H1 (cell line): ENCODE measurements at regions of chr6 and their contacts with region 1.

Region 1: DNA sequence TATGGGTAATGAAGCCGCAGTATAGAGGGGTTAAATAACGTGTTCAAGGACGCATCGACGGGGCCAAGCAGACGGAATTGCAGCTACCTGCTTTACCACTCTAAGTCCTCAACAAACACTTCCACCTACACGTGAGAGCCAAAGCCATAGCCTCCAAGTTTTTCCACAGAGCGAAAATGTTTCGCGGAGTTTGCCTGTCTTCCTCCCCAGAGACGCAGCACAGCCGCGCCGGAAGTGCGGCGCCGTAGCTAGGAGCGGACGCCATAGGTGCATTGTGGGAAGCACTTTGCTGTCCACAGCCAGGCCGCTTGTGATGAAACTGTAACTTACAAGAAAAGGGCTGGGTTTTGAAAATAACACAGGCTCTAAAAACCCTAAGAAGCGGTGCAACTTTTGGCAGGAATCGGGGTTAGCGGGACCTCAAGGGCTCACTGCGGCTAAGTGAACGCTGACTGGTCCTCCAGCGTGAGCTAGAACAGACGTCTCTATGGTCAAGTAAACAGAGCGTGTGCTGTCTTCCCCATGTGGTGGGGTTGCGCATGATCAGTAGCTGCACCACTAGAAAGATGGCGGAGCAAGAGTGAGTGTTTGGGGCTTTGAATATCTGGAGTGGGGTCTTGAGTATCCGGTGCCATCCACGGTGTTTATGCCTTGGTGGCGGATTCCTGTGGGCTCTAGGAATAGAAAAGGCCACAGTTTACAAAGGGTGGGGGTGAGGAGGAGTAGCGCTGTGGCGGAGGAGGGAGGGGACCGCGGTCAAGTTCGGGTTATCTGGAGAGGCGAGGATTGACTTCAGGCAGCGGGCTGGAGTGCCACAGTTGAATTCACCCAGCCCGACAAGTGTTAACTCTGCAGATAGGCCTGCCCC is at the start of gene RPL7L1:
- DNase-seq: peak in 1 of 2 experiments; percentile 85
- H3K4me3 ChIP-seq: peak within 1 kb of the TSS; percentile 89 to 99 (median 97)
- H3K27ac ChIP-seq: peak within 1 kb of the TSS; percentile 93
- H3K4me1 ChIP-seq: no peaks in the 10 kb centered on the region
- H3K27me3 ChIP-seq: no peaks in the 10 kb centered on the region
- CTCF ChIP-seq: no peak
- EP300 ChIP-seq: no peak
- POLR2A ChIP-seq: peak; percentile 92 to 97
- RAD21 ChIP-seq: no peak
- total RNA-seq, gene RPL7L1: 112 and 117 TPM in 2 replicates

Region 2: DNA sequence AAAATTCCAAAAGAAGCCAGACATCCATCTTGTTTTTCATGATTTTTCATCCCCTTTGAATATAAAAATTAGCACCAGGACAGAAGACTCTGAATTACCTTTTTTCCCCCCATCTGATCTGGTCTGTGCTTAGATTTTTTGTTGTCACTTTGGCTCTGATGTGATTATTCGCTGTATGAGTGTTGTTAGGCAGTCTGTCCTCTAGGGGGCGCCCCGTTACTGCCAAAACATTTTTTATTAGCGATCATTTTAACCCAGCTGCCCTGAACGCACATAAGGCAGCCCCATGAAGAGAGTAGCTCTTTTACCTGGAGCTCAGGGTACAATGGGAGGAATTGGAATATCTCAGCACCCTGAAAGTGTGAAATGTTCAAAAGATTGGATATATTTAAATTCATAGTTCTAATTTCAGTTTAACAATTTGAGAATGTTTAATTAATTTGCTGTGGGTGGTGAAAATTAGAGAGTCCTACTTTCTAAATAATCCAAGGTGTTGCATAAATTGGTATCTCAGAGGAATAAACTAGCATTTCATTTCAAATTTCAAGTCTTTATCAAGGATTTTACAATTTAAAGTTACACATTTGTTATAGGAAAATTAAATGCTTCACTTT is 218.0 kb before region 1 on chr6:
- CTCF ChIA-PET with region 1: interaction called, 13 read pairs
- POLR2A ChIA-PET with region 1: interaction called, 4 read pairs
- DNase-seq: peak; percentile 13 to 91
- H3K4me3 ChIP-seq: no peak overlapping the region
- H3K27ac ChIP-seq: no peak overlapping the region
- H3K4me1 ChIP-seq: no peaks in the 10 kb centered on the region
- H3K27me3 ChIP-seq: no peaks in the 10 kb centered on the region
- CTCF ChIP-seq: peak; percentile 16 to 88 (median 79)
- EP300 ChIP-seq: no peak
- POLR2A ChIP-seq: no peak
- RAD21 ChIP-seq: peak; percentile 85 to 92

Region 3: GRCh38 chr6:42726485-42727086 is 153.0 kb before region 1 on chr6:
- CTCF ChIA-PET with region 1: interaction called, 39 read pairs
- POLR2A ChIA-PET with region 1: interaction called, 8 read pairs
- DNase-seq: peak in 1 of 2 experiments; percentile 54
- H3K4me3 ChIP-seq: no peak overlapping the region
- H3K27ac ChIP-seq: no peak overlapping the region
- H3K4me1 ChIP-seq: no peaks in the 10 kb centered on the region
- H3K27me3 ChIP-seq: no peaks in the 10 kb centered on the region
- CTCF ChIP-seq: peak; percentile 70 to 90 (median 89)
- EP300 ChIP-seq: no peak
- POLR2A ChIP-seq: no peak
- RAD21 ChIP-seq: peak; percentile 95 to 97

Region 4: DNA sequence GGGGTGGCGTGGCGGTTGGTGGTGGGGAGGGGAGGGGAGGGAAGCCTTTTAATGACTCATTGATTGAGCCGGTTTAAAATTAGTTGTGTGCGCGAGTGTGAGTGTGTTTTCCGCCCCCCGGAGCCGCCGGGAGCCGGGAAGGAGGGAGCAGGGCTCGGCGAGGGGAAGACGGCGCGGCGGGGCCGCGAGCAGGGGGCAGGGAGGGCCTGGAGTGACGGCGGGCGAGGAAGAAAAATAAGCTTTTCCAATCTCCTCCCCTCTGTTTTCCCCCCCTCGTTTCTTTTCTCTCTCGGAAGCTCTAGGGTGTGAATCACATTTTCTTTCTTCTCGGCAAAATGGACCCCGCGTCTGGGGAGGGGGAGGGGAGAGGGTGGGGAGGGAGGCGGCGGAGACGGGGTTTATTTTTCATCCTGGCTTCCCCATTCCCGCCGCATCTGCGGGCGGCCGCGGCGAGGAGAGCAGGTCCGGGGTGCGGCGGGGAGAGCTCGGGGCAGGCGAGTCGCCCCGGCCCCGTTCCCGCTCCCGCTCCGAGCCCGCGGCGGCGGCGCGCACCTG is 96.9 kb before region 1 on chr6:
- CTCF ChIA-PET with region 1: no interaction called
- POLR2A ChIA-PET with region 1: interaction called, 23 read pairs
- DNase-seq: peak in 1 of 2 experiments; percentile 78
- H3K4me3 ChIP-seq: peak overlapping the region; percentile 82 to 96 (median 88)
- H3K27ac ChIP-seq: peak overlapping the region; percentile 98
- H3K4me1 ChIP-seq: peaks cover 0 to 9% (median 0%) of the 10 kb centered on the region in 4 experiments; a peak in 3 of 7 replicates
- H3K27me3 ChIP-seq: no peaks in the 10 kb centered on the region
- CTCF ChIP-seq: no peak
- EP300 ChIP-seq: no peak; a peak in 1 of 3 replicates
- POLR2A ChIP-seq: peak; percentile 80 to 83; a peak in 2 of 3 replicates
- RAD21 ChIP-seq: no peak

Region 5: GRCh38 chr6:42901536-42901957 is 21.9 kb after region 1 on chr6:
- CTCF ChIA-PET with region 1: interaction called, 8 read pairs
- POLR2A ChIA-PET with region 1: interaction called, 12 read pairs
- DNase-seq: peak in 1 of 2 experiments; percentile 75
- H3K4me3 ChIP-seq: no peak overlapping the region
- H3K27ac ChIP-seq: no peak overlapping the region
- H3K4me1 ChIP-seq: peaks cover 2 to 8% (median 7%) of the 10 kb centered on the region in 4 experiments; a peak in 5 of 7 replicates
- H3K27me3 ChIP-seq: no peaks in the 10 kb centered on the region
- CTCF ChIP-seq: peak; percentile 52 to 88 (median 86)
- EP300 ChIP-seq: no peak
- POLR2A ChIP-seq: no peak
- RAD21 ChIP-seq: peak; percentile 96

Region 6: DNA sequence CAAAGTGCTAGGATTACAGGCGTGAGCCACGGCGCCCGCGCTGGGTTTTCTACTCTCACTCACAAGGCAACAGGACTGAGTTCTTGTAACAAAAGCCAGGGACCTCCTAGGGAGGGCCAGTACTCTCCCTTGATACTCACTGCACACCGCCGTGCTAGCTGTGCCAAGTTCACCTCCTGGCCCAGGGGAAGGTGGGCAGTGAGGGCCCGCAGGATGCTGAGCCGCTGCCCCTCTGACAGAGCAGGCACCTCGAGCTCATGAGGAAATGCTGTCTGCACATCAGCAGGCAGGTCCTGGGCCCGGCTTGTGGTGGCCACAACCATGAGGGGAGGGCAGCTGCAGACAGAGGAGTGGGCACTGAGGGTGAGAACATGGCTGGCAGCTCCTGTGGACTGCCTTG is 87.6 kb after region 1 on chr6:
- CTCF ChIA-PET with region 1: no interaction called
- POLR2A ChIA-PET with region 1: no interaction called
- DNase-seq: no peak
- H3K4me3 ChIP-seq: no peak overlapping the region
- H3K27ac ChIP-seq: no peak overlapping the region
- H3K4me1 ChIP-seq: peaks cover 0 to 10% (median 4%) of the 10 kb centered on the region in 4 experiments; a peak in 5 of 7 replicates
- H3K27me3 ChIP-seq: no peaks in the 10 kb centered on the region
- CTCF ChIP-seq: no peak
- EP300 ChIP-seq: no peak
- POLR2A ChIP-seq: no peak
- RAD21 ChIP-seq: no peak

Region 7: DNA sequence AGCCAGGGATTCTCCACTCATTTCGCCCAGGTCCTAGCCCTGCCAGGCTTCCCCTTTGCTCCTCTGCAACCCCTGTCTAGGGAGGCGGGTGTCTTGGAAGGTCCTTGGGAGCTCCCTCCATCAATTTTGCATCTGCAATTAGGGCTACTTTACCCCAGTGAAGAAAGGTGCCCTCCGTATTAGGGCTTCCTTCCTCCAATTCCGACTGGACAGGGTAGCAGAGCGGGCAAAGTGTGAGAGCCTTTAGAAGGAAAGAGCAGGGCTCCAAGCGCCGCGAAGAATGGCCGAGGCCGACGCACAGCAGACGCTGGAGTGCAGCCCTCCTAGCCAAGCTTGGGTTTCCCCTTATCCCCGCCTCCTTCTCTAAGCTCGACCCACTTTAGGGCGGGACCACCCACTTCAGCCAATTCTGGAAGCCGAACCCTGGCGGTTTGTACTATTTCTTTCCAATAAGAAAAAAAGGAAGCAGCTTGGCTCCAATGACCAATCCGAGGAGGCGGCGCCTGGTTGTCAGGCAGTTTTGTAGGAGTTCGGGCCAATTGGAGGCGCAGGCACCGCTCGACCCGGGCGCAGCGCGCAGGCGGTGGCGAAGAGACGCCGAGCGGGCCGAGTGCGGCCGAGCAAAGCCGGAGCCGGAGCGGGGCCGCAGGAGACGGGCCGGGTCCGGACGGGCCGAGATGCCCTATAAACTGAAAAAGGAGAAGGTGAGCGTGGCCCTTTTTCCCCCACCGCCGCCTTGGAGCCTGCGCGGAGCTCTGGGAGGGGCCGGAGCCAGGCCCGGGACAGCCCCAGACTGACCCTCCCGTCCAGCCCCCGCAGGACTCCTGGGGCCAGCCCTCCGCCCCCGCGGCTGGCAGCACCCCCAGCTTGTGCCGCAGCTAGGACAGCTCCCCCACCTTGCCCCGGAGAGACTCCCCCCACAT is 104.7 kb after region 1 on chr6 and contains the start of gene PPP2R5D:
- CTCF ChIA-PET with region 1: no interaction called
- POLR2A ChIA-PET with region 1: no interaction called
- DNase-seq: peak; percentile 92 to 95
- H3K4me3 ChIP-seq: peak within 1 kb of the TSS; percentile 63 to 74 (median 70)
- H3K27ac ChIP-seq: peak within 1 kb of the TSS; percentile 73
- H3K4me1 ChIP-seq: peaks cover 3 to 10% (median 5%) of the 10 kb centered on the region in 4 experiments; a peak in 6 of 7 replicates
- H3K27me3 ChIP-seq: no peaks in the 10 kb centered on the region
- CTCF ChIP-seq: no peak
- EP300 ChIP-seq: no peak
- POLR2A ChIP-seq: peak; percentile 81 to 96
- RAD21 ChIP-seq: 0 out of 4 replicates have a peak, but pooled peaks of 1 of the 2 experiments have one; percentile 4
- total RNA-seq, gene PPP2R5D: 52.1 and 52.4 TPM in 2 replicates